Colonic mucosa (tissue), 4 donors: ENCODE measurements at regions of chr11 and their contacts with region 1.

Region 1: GRCh38 chr11:125941619-125942611 is 3.9 kb upstream of the VSIG10L2 start:
- DNase-seq: peak; percentile 58
- H3K4me3 ChIP-seq: no peak overlapping the region
- H3K27ac ChIP-seq: no peak overlapping the region
- H3K4me1 ChIP-seq: no peaks in the 10 kb centered on the region
- H3K27me3 ChIP-seq: no peaks in the 10 kb centered on the region
- CTCF ChIP-seq: peak; percentile 62

Region 2: GRCh38 chr11:126062679-126063506 is 121.0 kb after region 1 on chr11 and contains the start of gene CDON:
- intact Hi-C with region 1: loop called (anchors 5 kb)
- DNase-seq: peak; percentile 91
- H3K4me3 ChIP-seq: peak within 1 kb of the TSS; percentile 63
- H3K27ac ChIP-seq: peak within 1 kb of the TSS; percentile 24
- H3K4me1 ChIP-seq: no peaks in the 10 kb centered on the region
- H3K27me3 ChIP-seq: no peaks in the 10 kb centered on the region
- CTCF ChIP-seq: no peak
- total RNA-seq, gene CDON: 2.3 to 10.5 TPM

Region 3: DNA sequence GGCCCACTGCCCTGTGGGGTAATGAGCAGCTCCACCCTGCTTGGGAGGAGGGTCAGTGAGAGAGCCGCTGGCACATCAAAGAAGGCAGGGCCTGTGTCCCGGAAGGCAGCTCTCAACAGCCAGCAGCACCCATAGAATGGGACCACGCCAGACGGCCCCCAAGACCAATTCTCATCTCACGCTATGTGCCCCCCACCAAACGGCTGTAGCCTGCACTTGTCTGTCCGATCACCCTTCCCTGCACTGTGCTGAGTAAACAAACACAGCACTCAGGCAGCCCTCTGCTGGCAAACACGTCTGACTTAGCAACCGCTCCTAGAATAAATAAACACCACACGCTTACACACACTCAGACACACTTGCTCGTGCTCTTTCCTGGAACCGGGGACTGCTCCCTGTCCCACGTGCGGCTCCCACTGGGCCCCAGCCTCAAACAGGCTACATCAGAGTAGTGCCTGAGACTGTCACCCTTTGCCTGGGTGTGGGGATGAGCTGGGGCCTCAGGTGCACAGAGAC is 174.0 kb after region 1 on chr11:
- intact Hi-C with region 1: no loop called
- DNase-seq: peak; percentile 72
- H3K4me3 ChIP-seq: no peak overlapping the region
- H3K27ac ChIP-seq: peak overlapping the region; percentile 12
- H3K4me1 ChIP-seq: peaks cover 20% of the 10 kb centered on the region
- H3K27me3 ChIP-seq: no peaks in the 10 kb centered on the region
- CTCF ChIP-seq: no peak